ENCODE measurements at regions of chr11 and their contacts with region 1.

Region 1: GRCh38 chr11:75388386-75389275 is 10.7 kb upstream of the RPS3 start:
- DNase-seq: peak; percentile 95
- ATAC-seq: peak; percentile 40
- H3K4me3 ChIP-seq: no peak overlapping the region
- H3K27ac ChIP-seq: peak overlapping the region; percentile 8; the same call in 1 of the 2 replicates
- H3K4me1 ChIP-seq: peaks cover 41% of the 10 kb centered on the region
- H3K27me3 ChIP-seq: no peaks in the 10 kb centered on the region
- CTCF ChIP-seq: peak; percentile 98

Region 2: DNA sequence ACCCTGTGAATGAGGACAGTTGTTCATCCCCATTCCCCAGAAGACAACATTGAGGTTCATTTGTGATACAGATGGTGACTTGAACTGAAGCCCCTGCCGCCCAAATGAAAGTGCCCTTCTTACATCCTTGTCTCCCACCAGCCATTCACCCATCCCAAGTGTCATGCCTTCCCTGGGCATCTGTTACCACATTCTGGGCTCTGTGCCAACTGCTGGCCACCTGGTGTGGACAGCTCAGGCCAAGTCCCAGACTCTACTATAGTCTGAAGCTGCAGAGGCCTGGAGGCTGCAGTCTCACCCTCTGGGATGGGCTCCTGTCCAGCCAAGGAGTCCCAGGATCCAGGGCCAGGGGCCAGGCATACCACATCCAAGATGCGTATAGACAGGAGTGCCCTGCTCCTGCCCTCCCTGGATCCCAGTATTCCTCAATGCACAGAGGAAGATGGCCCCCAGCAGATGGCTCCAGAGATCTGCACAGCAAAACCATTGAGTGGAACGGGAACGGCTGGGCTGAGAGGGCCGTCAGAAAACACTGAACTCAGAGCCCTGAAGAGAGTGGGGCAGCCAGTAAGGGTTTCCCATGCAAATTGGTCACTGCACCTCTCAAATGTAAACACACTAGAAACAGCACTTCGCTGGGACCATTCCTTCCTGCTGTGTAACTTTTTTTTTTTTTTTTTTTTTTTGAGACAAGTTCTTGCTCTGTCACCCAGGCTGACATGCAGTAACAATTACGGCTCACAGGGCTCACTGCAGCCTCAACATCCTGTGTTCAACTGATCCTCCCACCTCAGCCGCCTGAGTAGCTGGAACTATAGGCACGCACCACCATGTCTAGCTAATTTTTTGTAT is 60.0 kb before region 1 on chr11:
- CTCF ChIA-PET with region 1: interaction called, 4 read pairs
- POLR2A ChIA-PET with region 1: no interaction called
- intact Hi-C with region 1: loop called (anchors 1 kb)
- DNase-seq: peak; percentile 85
- ATAC-seq: peak; percentile 69
- H3K4me3 ChIP-seq: no peak overlapping the region
- H3K27ac ChIP-seq: no peak overlapping the region
- H3K4me1 ChIP-seq: peaks cover 30% of the 10 kb centered on the region
- H3K27me3 ChIP-seq: no peaks in the 10 kb centered on the region
- CTCF ChIP-seq: peak; percentile 93

Region 3: GRCh38 chr11:75406338-75406777 is 17.7 kb after region 1 on chr11:
- CTCF ChIA-PET with region 1: no interaction called
- POLR2A ChIA-PET with region 1: no interaction called
- intact Hi-C with region 1: loop called (anchors 2 kb)
- DNase-seq: peak; percentile 67
- ATAC-seq: peak; percentile 75
- H3K4me3 ChIP-seq: no peak overlapping the region
- H3K27ac ChIP-seq: no peak overlapping the region
- H3K4me1 ChIP-seq: peaks cover 49% of the 10 kb centered on the region
- H3K27me3 ChIP-seq: no peaks in the 10 kb centered on the region
- CTCF ChIP-seq: no peak

Region 4: GRCh38 chr11:75429902-75430719 is 41.5 kb after region 1 on chr11:
- CTCF ChIA-PET with region 1: interaction called, 9 read pairs
- POLR2A ChIA-PET with region 1: no interaction called
- intact Hi-C with region 1: loop called (anchors 2 kb)
- DNase-seq: peak; percentile 79
- ATAC-seq: peak; percentile 38
- H3K4me3 ChIP-seq: peak overlapping the region; percentile 66
- H3K27ac ChIP-seq: no peak overlapping the region
- H3K4me1 ChIP-seq: peaks cover 28% of the 10 kb centered on the region
- H3K27me3 ChIP-seq: no peaks in the 10 kb centered on the region
- CTCF ChIP-seq: no peak

Region 5: GRCh38 chr11:75532200-75533048 is 143.8 kb after region 1 on chr11:
- CTCF ChIA-PET with region 1: interaction called, 5 read pairs
- POLR2A ChIA-PET with region 1: no interaction called
- intact Hi-C with region 1: loop called (anchors 1 kb)
- DNase-seq: peak; percentile 93
- ATAC-seq: peak; percentile 52
- H3K4me3 ChIP-seq: no peak overlapping the region; the same call in 1 of the 2 replicates
- H3K27ac ChIP-seq: no peak overlapping the region
- H3K4me1 ChIP-seq: peaks cover 33% of the 10 kb centered on the region
- H3K27me3 ChIP-seq: no peaks in the 10 kb centered on the region
- CTCF ChIP-seq: peak; percentile 93

Measured in PC-3 (cell line).